Panc1 (cell line): ENCODE measurements at regions of chr4 and their contacts with region 1.

Region 1: GRCh38 chr4:94214703-94215319 is 7.1 kb downstream of the SMARCAD1 start:
- DNase-seq: no peak
- ATAC-seq: no peak
- H3K4me3 ChIP-seq: no peak overlapping the region
- H3K27ac ChIP-seq: no peak overlapping the region
- H3K4me1 ChIP-seq: peaks cover under 1% of the 10 kb centered on the region; the same call in 1 of the 2 replicates
- H3K27me3 ChIP-seq: no peaks in the 10 kb centered on the region
- CTCF ChIP-seq: no peak

Region 2: DNA sequence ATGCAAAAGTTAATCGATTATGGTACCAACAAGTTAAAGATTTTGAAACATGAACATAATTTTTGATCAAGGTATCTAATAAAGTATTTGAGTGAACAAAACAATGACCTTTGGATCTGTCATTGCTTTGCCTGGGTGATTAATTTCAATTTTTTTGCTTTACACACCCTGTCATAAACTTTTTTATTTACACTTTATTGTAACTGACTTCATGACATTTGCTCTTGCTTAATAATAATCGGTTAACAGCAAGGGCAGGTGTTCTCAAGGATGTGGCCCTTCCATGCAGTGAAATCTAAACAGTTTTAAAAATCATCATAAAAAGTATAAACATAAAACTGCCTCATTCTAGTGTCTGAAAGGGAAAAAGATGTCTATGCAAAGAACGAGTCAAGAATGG is 362.1 kb before region 1 on chr4:
- CTCF ChIA-PET with region 1: no interaction called
- POLR2A ChIA-PET with region 1: no interaction called
- in situ Hi-C with region 1: no loop called
- intact Hi-C with region 1: loop called (anchors 5 kb)
- DNase-seq: no peak
- ATAC-seq: no peak
- H3K4me3 ChIP-seq: no peak overlapping the region
- H3K27ac ChIP-seq: no peak overlapping the region
- H3K4me1 ChIP-seq: no peaks in the 10 kb centered on the region
- H3K27me3 ChIP-seq: no peaks in the 10 kb centered on the region
- CTCF ChIP-seq: no peak

Region 3: DNA sequence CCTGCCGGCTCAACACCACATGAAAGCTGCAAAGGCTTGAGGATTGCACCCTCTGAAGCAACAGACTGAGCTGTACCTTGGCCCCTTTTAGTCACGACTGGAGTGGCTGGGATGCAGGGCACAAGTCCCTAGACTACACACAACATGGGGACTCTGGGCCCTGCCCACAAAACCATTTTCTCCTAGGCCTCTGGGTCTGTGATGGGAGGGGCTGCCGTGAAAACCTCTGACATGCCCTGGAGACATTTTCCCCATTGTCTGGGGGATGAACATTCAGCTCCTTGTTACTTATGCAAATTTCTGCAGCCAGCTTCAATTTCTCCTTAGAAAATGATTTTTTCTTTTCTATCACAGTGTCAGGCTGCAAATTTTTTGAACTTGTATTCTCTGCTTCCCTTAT is 130.7 kb before region 1 on chr4:
- CTCF ChIA-PET with region 1: no interaction called
- POLR2A ChIA-PET with region 1: no interaction called
- in situ Hi-C with region 1: no loop called
- intact Hi-C with region 1: no loop called
- DNase-seq: no peak
- ATAC-seq: no peak
- H3K4me3 ChIP-seq: no peak overlapping the region
- H3K27ac ChIP-seq: no peak overlapping the region
- H3K4me1 ChIP-seq: no peaks in the 10 kb centered on the region
- H3K27me3 ChIP-seq: no peaks in the 10 kb centered on the region
- CTCF ChIP-seq: no peak